Activated CD4-positive, alpha-beta memory T cell treated with anti-CD3 and anti-CD28 coated beads, Interleukin-2, amount 10 ng/mL, durations not matched to agents 7 days and 5 days (primary cell): ENCODE measurements at regions of chr2 and their contacts with region 1.

Region 1: GRCh38 chr2:234500394-234501006 is 3.6 kb upstream of the ARL4C start:
- DNase-seq: peak; percentile 81
- H3K4me3 Mint-ChIP-seq: no peak overlapping the region
- H3K27ac Mint-ChIP-seq: peak overlapping the region; percentile 65
- H3K4me1 Mint-ChIP-seq: peaks cover 31% of the 10 kb centered on the region
- H3K27me3 Mint-ChIP-seq: peaks cover 12% of the 10 kb centered on the region

Region 2: GRCh38 chr2:233854241-233854981 is 646.1 kb before region 1 on chr2 and contains the start of gene HJURP:
- CTCF ChIA-PET with region 1: interaction called, 3 read pairs
- POLR2A ChIA-PET with region 1: interaction called, 33 read pairs
- DNase-seq: peak; percentile 97
- H3K4me3 Mint-ChIP-seq: peak within 1 kb of the TSS; percentile 99
- H3K27ac Mint-ChIP-seq: peak within 1 kb of the TSS; percentile 98
- H3K4me1 Mint-ChIP-seq: peaks cover 54% of the 10 kb centered on the region
- H3K27me3 Mint-ChIP-seq: peaks cover 2% of the 10 kb centered on the region
- total RNA-seq, gene HJURP: 126 to 129 TPM

Region 3: DNA sequence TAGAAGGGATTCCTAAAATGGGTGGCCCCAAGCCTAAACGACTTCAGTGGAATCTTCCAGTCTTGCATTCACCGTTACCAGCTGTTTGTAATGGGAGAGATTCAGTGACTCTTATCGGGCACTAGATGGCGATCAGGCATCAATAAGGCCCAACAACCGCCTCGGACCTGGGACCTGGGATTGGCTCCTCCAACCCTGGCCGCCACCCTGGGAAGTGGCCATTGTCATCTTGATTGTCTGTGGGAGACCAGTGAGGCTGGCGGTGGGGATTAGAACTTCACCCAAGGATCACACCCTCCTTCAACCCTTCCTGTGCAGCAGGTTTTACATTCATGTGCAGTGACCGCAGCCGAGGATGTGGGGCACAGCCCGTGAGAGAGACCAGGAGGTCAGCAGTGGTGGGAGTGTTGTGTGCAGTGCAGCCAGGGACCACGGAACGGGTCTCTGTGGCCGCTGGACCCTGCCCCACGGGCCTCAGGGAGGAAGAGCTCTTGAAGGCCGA is 364.7 kb before region 1 on chr2:
- CTCF ChIA-PET with region 1: interaction called, 77 read pairs
- POLR2A ChIA-PET with region 1: interaction called, 18 read pairs
- DNase-seq: peak; percentile 67
- H3K4me3 Mint-ChIP-seq: no peak overlapping the region
- H3K27ac Mint-ChIP-seq: peak overlapping the region; percentile 38
- H3K4me1 Mint-ChIP-seq: peaks cover 22% of the 10 kb centered on the region
- H3K27me3 Mint-ChIP-seq: peaks cover 11% of the 10 kb centered on the region

Region 4: DNA sequence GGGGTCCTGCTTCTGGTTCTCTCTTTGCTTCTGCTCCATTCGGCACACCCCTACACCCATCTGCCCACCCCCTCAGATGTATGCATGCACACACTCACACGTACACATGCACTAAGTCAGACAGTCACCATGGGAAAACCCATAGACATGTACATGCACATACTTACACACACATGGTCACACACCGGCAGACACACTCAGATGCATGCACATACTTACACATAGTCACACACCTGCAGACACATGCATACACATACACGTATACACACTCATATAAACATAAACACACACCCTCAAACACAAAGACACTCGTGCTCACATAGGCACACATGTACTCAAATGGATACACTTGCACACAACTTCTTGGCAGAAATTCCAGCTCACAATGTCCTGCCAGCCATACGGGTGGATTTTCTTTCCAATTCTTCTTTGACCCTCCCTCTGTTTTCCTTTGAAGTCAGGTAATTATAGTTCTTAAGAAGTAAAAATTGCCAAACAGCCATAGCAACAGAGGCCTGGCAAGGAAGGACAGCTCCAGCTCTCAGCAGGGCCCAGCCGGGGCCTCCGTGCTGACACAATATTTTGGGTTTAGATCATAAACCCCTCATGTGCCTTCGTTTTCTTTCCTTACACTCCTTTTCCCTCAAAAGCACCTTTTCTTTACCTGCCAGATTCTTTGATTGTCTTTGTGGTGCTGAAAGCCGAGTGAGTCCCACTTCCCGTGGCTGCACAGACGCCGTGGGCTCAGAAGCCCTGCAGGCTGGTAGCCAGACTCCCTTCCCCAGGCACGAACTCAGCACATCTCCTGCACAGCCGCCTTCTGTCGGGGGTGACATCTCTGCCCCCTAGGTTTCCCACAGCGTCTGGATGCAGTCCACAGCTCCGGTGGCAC is 199.3 kb before region 1 on chr2:
- CTCF ChIA-PET with region 1: no interaction called
- POLR2A ChIA-PET with region 1: interaction called, 51 read pairs
- DNase-seq: no peak
- H3K4me3 Mint-ChIP-seq: no peak overlapping the region
- H3K27ac Mint-ChIP-seq: no peak overlapping the region
- H3K4me1 Mint-ChIP-seq: peaks cover 72% of the 10 kb centered on the region
- H3K27me3 Mint-ChIP-seq: no peaks in the 10 kb centered on the region

Region 5: GRCh38 chr2:234425619-234426603 is 74.6 kb before region 1 on chr2:
- CTCF ChIA-PET with region 1: interaction called, 34 read pairs
- POLR2A ChIA-PET with region 1: interaction called, 294 read pairs
- DNase-seq: peak; percentile 88
- H3K4me3 Mint-ChIP-seq: peak overlapping the region; percentile 57
- H3K27ac Mint-ChIP-seq: peak overlapping the region; percentile 99
- H3K4me1 Mint-ChIP-seq: peaks cover 85% of the 10 kb centered on the region
- H3K27me3 Mint-ChIP-seq: no peaks in the 10 kb centered on the region

Region 6: GRCh38 chr2:234478121-234478858 is 22.2 kb before region 1 on chr2:
- CTCF ChIA-PET with region 1: interaction called, 7 read pairs
- POLR2A ChIA-PET with region 1: interaction called, 51 read pairs
- DNase-seq: no peak
- H3K4me3 Mint-ChIP-seq: no peak overlapping the region
- H3K27ac Mint-ChIP-seq: peak overlapping the region; percentile 80
- H3K4me1 Mint-ChIP-seq: peaks cover 74% of the 10 kb centered on the region
- H3K27me3 Mint-ChIP-seq: no peaks in the 10 kb centered on the region

Region 7: GRCh38 chr2:234690569-234691213 is 190.2 kb after region 1 on chr2:
- CTCF ChIA-PET with region 1: no interaction called
- POLR2A ChIA-PET with region 1: no interaction called
- DNase-seq: no peak
- H3K4me3 Mint-ChIP-seq: no peak overlapping the region
- H3K27ac Mint-ChIP-seq: no peak overlapping the region
- H3K4me1 Mint-ChIP-seq: no peaks in the 10 kb centered on the region
- H3K27me3 Mint-ChIP-seq: peaks cover 16% of the 10 kb centered on the region